Activated naive CD4-positive, alpha-beta T cell treated with anti-CD3 and anti-CD28 coated beads for 36 hours (primary cell): ENCODE measurements at regions of chr12 and their contacts with region 1.

Region 1: DNA sequence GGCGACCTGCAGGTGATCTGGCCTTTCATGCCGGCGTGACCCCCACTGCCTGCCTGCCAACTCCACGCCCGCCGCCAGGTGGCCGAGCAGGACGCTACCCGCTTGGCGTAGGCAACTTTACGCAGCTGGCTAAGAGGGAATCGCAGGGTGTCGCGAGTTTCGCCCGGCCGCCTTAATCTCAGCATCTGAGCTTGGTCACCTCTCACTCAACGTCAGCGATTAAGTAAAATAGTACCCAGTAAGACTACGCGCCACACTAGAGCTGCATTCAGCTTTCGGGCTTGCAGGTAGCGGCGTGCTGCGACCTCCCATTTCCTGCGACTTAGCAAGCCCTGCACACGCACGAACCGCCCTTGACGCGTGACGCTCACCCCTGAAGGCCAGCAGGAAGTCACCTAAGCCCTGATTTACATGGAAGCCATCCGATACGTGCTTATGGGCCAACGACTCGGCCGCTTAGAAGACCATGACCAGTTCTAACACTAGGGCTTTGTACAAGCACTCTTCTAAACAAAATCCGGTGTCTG is 33.2 kb downstream of the WBP11 start:
- DNase-seq: peak; percentile 89
- H3K4me3 Mint-ChIP-seq: peak overlapping the region; percentile 97
- H3K27ac Mint-ChIP-seq: peak overlapping the region; percentile 98
- H3K4me1 Mint-ChIP-seq: peaks cover 38% of the 10 kb centered on the region
- H3K27me3 Mint-ChIP-seq: no peaks in the 10 kb centered on the region

Region 2: GRCh38 chr12:14394317-14395073 is 375.5 kb before region 1 on chr12:
- CTCF ChIA-PET with region 1: no interaction called
- intact Hi-C with region 1: loop called (anchors 2 kb)
- DNase-seq: peak; percentile 62
- H3K4me3 Mint-ChIP-seq: peak overlapping the region; percentile 77
- H3K27ac Mint-ChIP-seq: peak overlapping the region; percentile 98
- H3K4me1 Mint-ChIP-seq: peaks cover 82% of the 10 kb centered on the region
- H3K27me3 Mint-ChIP-seq: no peaks in the 10 kb centered on the region

Region 3: DNA sequence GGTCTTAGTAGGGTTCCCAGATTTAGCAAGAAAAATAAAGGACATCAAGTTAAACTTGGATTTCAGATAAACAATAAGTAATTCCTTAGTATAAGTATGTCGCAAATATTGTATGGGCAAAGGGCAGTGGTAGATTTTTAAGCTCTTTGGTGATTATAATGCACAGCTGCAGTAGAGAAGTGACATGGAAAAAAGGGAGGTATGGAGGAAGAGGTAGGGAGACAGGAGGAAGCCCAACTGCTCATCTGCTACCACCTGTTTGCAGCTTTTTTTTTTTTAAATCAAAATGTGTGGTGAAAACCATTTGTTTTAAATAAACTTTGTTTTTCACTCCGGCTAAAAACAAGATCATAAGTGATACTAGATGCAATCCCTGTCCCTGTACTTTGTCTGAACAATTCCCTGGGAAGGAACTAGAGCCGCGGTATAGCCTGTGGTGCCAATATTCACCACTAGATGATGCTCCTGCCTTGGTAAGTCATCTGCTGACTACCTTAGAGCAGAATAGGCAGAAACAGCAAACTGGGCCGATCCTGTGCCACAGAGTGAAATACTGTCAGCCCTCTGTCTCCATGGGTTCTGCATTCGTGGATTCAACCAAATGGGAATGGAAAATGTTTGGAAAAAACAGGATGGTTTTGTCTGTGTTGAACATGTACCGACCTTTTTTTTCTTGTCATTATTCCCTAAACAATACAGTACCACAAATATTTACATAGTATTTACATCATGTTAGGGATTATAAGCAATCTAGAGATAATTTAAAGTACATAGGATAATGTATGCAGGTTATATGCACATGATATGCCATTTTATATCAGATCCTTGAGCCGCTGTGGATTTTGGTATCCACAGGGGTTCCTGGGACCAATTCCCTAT is 140.0 kb before region 1 on chr12:
- CTCF ChIA-PET with region 1: no interaction called
- intact Hi-C with region 1: loop called (anchors 1 kb)
- DNase-seq: peak; percentile 79
- H3K4me3 Mint-ChIP-seq: no peak overlapping the region
- H3K27ac Mint-ChIP-seq: no peak overlapping the region
- H3K4me1 Mint-ChIP-seq: no peaks in the 10 kb centered on the region
- H3K27me3 Mint-ChIP-seq: no peaks in the 10 kb centered on the region

Region 4: DNA sequence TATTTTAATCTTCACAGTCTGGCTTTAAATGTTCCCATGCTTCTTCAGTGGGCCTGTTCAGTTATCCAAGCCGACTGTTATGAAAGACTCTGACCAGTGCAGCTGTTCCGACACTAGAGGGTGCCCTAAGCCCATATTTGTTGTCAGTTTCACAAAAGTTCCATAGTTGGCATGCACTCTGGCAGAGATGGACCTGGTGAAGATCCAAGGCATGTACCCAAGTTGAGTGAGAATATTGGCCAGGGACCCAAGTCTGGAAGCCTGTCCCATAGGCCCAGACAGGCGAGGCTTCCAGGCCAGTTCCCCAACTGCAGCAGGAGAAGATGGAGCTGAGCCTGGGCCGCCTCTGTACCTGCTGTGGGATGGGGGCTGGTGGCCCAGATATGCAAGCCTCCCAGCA is 46.3 kb before region 1 on chr12:
- CTCF ChIA-PET with region 1: interaction called, 9 read pairs
- intact Hi-C with region 1: loop called (anchors 2 kb)
- DNase-seq: peak; percentile 74
- H3K4me3 Mint-ChIP-seq: no peak overlapping the region
- H3K27ac Mint-ChIP-seq: no peak overlapping the region
- H3K4me1 Mint-ChIP-seq: no peaks in the 10 kb centered on the region
- H3K27me3 Mint-ChIP-seq: no peaks in the 10 kb centered on the region

Region 5: DNA sequence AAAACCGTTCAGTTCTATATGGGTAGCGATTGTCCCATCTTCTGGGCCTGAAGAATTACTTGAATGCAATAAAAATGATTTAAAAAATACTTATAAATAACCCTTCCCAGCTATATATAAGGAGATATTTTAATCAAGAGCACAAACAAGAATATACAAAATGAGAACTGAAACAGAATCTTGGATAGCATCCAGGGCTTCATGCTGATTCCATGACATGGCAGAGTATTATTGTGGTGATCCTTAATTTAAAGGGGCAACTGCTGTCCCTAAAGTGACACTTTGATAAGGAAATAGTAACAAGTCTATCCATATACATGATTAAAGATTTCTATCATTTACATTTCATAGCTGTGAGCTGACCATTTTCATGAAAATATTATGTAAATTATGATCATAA is 14.4 kb after region 1 on chr12:
- CTCF ChIA-PET with region 1: interaction called, 14 read pairs
- intact Hi-C with region 1: no loop called
- DNase-seq: no peak
- H3K4me3 Mint-ChIP-seq: no peak overlapping the region
- H3K27ac Mint-ChIP-seq: no peak overlapping the region
- H3K4me1 Mint-ChIP-seq: peaks cover 2% of the 10 kb centered on the region
- H3K27me3 Mint-ChIP-seq: no peaks in the 10 kb centered on the region

Region 6: DNA sequence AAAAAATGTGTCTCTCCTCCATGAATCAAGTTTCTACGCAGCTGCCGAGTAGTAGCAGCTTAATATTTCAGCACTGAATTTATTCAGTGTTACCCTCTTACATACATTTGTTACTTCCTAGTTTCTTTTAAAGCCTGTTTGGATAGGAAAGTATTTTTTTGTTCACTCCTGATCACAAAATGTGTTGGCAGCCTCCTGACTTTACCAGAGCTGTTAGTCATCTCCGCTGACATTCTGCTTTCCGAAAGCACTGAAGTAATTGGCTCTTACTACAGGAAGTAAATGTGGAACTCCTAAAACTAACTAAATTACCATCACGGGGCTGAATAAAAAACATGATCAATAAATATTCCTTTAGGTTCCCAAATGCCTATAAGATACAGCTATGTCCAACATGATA is 793.6 kb after region 1 on chr12:
- CTCF ChIA-PET with region 1: no interaction called
- intact Hi-C with region 1: loop called (anchors 2 kb)
- DNase-seq: peak; percentile 67
- H3K4me3 Mint-ChIP-seq: peak overlapping the region; percentile 58
- H3K27ac Mint-ChIP-seq: peak overlapping the region; percentile 90
- H3K4me1 Mint-ChIP-seq: peaks cover 81% of the 10 kb centered on the region
- H3K27me3 Mint-ChIP-seq: no peaks in the 10 kb centered on the region

Region 7: GRCh38 chr12:15575671-15576541 is 805.9 kb after region 1 on chr12:
- CTCF ChIA-PET with region 1: no interaction called
- intact Hi-C with region 1: loop called (anchors 1 kb)
- DNase-seq: no peak
- H3K4me3 Mint-ChIP-seq: no peak overlapping the region
- H3K27ac Mint-ChIP-seq: peak overlapping the region; percentile 48
- H3K4me1 Mint-ChIP-seq: peaks cover 53% of the 10 kb centered on the region
- H3K27me3 Mint-ChIP-seq: no peaks in the 10 kb centered on the region